Ovary (tissue), 10 donors: ENCODE measurements at regions of chr1 and their contacts with region 1.

Region 1: DNA sequence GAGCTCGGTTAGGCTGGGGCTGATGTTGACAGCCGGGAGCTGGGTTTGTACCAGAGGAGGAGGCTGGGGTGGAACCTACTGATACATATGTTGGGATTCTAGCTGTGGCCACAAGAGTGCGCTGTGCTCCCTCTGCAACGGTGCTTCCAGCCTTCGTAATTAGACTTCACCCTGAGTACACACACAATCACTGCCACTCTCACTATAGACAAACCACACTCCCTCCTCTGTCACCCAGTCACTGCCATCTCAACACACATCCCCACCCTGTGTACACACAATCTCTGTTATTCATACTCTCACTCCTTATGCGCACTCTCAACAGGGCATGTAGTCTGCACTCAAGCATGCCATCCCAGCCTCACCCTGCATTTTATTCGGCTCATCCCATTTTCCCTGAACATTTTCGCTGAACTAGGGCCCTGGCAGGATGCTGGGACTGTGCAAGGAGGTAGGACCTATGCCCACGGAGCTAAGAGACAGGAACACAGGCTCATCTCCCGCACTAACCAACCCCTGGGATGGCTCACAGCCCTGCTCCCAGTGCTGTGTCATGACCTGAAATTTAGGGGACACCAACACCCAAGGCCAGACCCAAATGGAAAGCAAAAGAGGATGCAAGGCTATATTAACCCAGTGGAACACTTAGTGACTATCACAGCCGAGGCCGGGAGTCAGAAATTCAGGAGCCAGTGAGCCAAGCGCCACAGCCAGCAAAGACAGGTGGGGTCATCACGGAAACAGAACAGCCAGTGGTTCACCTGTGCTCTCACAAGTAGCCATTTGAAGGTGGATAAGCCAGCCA is 5.7 kb downstream of the GJB3 start:
- DNase-seq: peak; percentile 43 to 73 (median 53)
- H3K4me3 ChIP-seq: no peak overlapping the region
- H3K27ac ChIP-seq: no peak overlapping the region
- H3K4me1 ChIP-seq: no peaks in the 10 kb centered on the region
- H3K27me3 ChIP-seq: no peaks in the 10 kb centered on the region
- CTCF ChIP-seq: peak; percentile 21 to 51 (median 42)
- EP300 ChIP-seq: no peak
- POLR2A ChIP-seq: no peak

Region 2: GRCh38 chr1:34865981-34866761 is 79.4 kb after region 1 on chr1:
- intact Hi-C with region 1: loop called in 1 of 4 experiments (anchors 5 kb)
- DNase-seq: peak; percentile 79 to 93 (median 87)
- H3K4me3 ChIP-seq: peak overlapping the region; percentile 64
- H3K27ac ChIP-seq: peak overlapping the region; percentile 79 to 80
- H3K4me1 ChIP-seq: peaks cover 6% of the 10 kb centered on the region
- H3K27me3 ChIP-seq: no peaks in the 10 kb centered on the region
- CTCF ChIP-seq: peak; percentile 88 to 99 (median 91)
- EP300 ChIP-seq: no peak
- POLR2A ChIP-seq: no peak

Region 3: GRCh38 chr1:35129080-35129479 is 342.4 kb after region 1 on chr1:
- intact Hi-C with region 1: no loop called
- DNase-seq: no peak
- H3K4me3 ChIP-seq: no peak overlapping the region
- H3K27ac ChIP-seq: no peak overlapping the region
- H3K4me1 ChIP-seq: no peaks in the 10 kb centered on the region
- H3K27me3 ChIP-seq: no peaks in the 10 kb centered on the region
- CTCF ChIP-seq: no peak
- EP300 ChIP-seq: no peak
- POLR2A ChIP-seq: no peak